ENCODE measurements at regions of chr3 and their contacts with region 1.

Region 1: GRCh38 chr3:150429767-150430671 is 21.9 kb downstream of the TSC22D2 start:
- DNase-seq: no peak
- ATAC-seq: no peak
- H3K4me3 ChIP-seq: no peak overlapping the region
- H3K4me3 Mint-ChIP-seq: no peak overlapping the region
- H3K27ac ChIP-seq: no peak overlapping the region
- H3K27ac Mint-ChIP-seq: no peak overlapping the region
- H3K4me1 ChIP-seq: peaks cover 22% of the 10 kb centered on the region
- H3K4me1 Mint-ChIP-seq: peaks cover 60% of the 10 kb centered on the region
- H3K27me3 ChIP-seq: no peaks in the 10 kb centered on the region
- H3K27me3 Mint-ChIP-seq: no peaks in the 10 kb centered on the region
- CTCF ChIP-seq: no peak

Region 2: DNA sequence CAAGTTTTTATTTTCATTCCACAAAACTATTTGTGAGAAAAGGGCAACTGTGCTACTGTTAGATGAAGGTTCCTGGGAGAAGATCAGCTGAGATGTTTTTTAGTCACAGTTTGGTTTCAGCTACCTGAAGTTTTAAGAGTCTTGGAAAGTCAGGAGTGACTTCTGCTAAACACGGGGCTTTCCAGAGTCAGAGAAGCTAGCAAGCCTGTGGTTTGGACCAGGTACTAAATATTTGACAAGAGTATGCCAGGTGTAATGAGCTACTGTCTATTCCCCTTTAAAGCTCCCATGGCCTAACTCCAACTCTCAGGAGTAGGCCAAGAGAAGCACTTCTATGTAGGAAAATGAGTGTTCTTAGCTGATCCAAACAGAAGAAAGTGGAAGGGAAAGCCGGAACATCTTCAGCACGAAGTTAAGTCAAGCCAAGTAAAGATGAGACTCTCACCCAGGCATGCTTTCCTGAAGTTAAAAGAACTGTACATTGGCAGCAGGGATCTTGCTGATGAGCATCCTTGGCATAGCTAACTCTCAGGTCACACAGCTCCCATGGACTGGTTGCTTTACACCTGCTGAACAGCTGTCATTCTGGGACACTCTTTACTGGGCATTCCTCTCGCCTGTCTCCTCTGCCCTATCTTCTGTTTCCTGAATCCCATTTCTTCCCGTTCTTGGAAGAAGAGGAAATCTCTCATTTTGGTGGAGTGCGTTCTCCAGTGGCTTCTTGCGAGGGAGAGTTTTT is 1119.1 kb before region 1 on chr3:
- CTCF ChIA-PET with region 1: no interaction called
- POLR2A ChIA-PET with region 1: no interaction called
- intact Hi-C with region 1: no loop called
- DNase-seq: no peak
- ATAC-seq: no peak
- H3K4me3 ChIP-seq: no peak overlapping the region
- H3K4me3 Mint-ChIP-seq: no peak overlapping the region
- H3K27ac ChIP-seq: no peak overlapping the region
- H3K27ac Mint-ChIP-seq: no peak overlapping the region
- H3K4me1 ChIP-seq: no peaks in the 10 kb centered on the region
- H3K4me1 Mint-ChIP-seq: no peaks in the 10 kb centered on the region
- H3K27me3 ChIP-seq: no peaks in the 10 kb centered on the region
- H3K27me3 Mint-ChIP-seq: peaks cover 22% of the 10 kb centered on the region
- CTCF ChIP-seq: no peak

Region 3: DNA sequence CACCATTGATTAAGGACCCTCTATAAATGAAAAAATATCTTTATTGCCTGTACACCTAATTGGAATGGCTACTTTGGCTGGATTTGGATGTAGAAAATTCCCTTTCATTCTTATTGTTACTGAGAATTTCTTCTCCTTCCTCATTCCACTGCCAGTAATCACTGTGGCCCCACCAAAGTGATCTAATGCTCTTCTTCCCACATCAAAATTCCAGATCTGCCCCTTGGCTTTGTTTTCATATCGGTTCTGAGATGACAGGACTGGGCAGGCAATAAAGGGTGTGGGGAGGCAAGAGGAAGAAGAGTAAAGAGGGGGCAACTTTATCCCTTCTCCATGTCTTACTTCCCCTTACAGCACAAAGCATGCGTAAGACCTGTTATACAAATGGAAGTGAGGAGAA is 639.8 kb before region 1 on chr3:
- CTCF ChIA-PET with region 1: no interaction called
- POLR2A ChIA-PET with region 1: no interaction called
- intact Hi-C with region 1: no loop called
- DNase-seq: no peak
- ATAC-seq: no peak
- H3K4me3 ChIP-seq: no peak overlapping the region
- H3K4me3 Mint-ChIP-seq: no peak overlapping the region
- H3K27ac ChIP-seq: no peak overlapping the region
- H3K27ac Mint-ChIP-seq: no peak overlapping the region
- H3K4me1 ChIP-seq: no peaks in the 10 kb centered on the region
- H3K4me1 Mint-ChIP-seq: no peaks in the 10 kb centered on the region
- H3K27me3 ChIP-seq: peaks cover 0 to 2% of the 10 kb centered on the region in 2 experiments
- H3K27me3 Mint-ChIP-seq: peaks cover 32% of the 10 kb centered on the region
- CTCF ChIP-seq: no peak

Region 4: DNA sequence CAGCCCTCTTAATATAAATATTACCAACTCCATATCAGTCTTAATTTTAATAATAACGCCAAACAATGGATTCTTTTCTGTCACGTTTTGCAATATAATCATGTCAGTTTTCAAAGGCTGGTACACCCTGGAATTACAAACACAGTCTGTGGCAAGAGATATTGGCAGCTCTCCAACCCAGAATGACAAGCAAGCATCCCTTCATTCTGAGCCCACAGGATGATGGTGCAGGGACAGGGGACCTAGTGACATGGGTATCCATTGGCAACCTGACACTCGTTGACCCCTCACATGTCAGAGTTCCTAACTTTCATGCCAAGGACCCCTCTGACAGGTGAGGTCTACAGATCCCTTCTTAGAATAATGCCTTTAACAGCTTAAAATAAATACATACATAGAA is 176.4 kb before region 1 on chr3:
- CTCF ChIA-PET with region 1: no interaction called
- POLR2A ChIA-PET with region 1: no interaction called
- intact Hi-C with region 1: no loop called
- DNase-seq: no peak
- ATAC-seq: no peak
- H3K4me3 ChIP-seq: no peak overlapping the region
- H3K4me3 Mint-ChIP-seq: no peak overlapping the region
- H3K27ac ChIP-seq: no peak overlapping the region
- H3K27ac Mint-ChIP-seq: no peak overlapping the region
- H3K4me1 ChIP-seq: no peaks in the 10 kb centered on the region
- H3K4me1 Mint-ChIP-seq: no peaks in the 10 kb centered on the region
- H3K27me3 ChIP-seq: no peaks in the 10 kb centered on the region
- H3K27me3 Mint-ChIP-seq: peaks cover 9% of the 10 kb centered on the region
- CTCF ChIP-seq: no peak

Region 5: GRCh38 chr3:150414258-150414657 is 15.8 kb before region 1 on chr3:
- CTCF ChIA-PET with region 1: interaction called, 8 read pairs
- POLR2A ChIA-PET with region 1: interaction called, 9 read pairs
- intact Hi-C with region 1: loop called (anchors 2 kb)
- DNase-seq: no peak
- ATAC-seq: no peak
- H3K4me3 ChIP-seq: peak overlapping the region in 1 of 2 experiments; percentile 13
- H3K4me3 Mint-ChIP-seq: peak overlapping the region; percentile 89
- H3K27ac ChIP-seq: no peak overlapping the region
- H3K27ac Mint-ChIP-seq: no peak overlapping the region
- H3K4me1 ChIP-seq: peaks cover 48% of the 10 kb centered on the region
- H3K4me1 Mint-ChIP-seq: peaks cover 75% of the 10 kb centered on the region
- H3K27me3 ChIP-seq: no peaks in the 10 kb centered on the region
- H3K27me3 Mint-ChIP-seq: no peaks in the 10 kb centered on the region
- CTCF ChIP-seq: no peak